ENCODE measurements at regions of chr10 and their contacts with region 1.

Region 1: GRCh38 chr10:86960003-86960862 is 1.8 kb downstream of the SNCG start:
- DNase-seq: peak; percentile 32 to 61
- ATAC-seq: peak; percentile 82

Region 2: GRCh38 chr10:86688398-86688921 is 271.8 kb before region 1 on chr10:
- intact Hi-C with region 1: loop called in 1 of 2 experiments (anchors 10 kb)
- DNase-seq: peak in 1 of 2 donors; percentile 51
- ATAC-seq: peak; percentile 83

Measured in left colon (tissue), 2 donors.